Motor neuron (in vitro differentiated cells): ENCODE measurements at regions of chr17 and their contacts with region 1.

Region 1: GRCh38 chr17:15456972-15457722 is 10.3 kb downstream of the CDRT4 start:
- ATAC-seq: peak in 6 of 8 experiments; percentile 48 to 96 (median 74)
- H3K4me3 ChIP-seq: no peak overlapping the region
- H3K27ac ChIP-seq: no peak overlapping the region
- H3K4me1 ChIP-seq: no peaks in the 10 kb centered on the region

Region 2: GRCh38 chr17:15351925-15352324 is 105.2 kb before region 1 on chr17:
- in situ Hi-C with region 1: loop called in 1 of 9 experiments (anchors 25 kb)
- ATAC-seq: peak in 1 of 8 experiments; percentile 12
- H3K4me3 ChIP-seq: no peak overlapping the region
- H3K27ac ChIP-seq: no peak overlapping the region
- H3K4me1 ChIP-seq: no peaks in the 10 kb centered on the region